ENCODE measurements at regions of chr9 and their contacts with region 1.

Region 1: DNA sequence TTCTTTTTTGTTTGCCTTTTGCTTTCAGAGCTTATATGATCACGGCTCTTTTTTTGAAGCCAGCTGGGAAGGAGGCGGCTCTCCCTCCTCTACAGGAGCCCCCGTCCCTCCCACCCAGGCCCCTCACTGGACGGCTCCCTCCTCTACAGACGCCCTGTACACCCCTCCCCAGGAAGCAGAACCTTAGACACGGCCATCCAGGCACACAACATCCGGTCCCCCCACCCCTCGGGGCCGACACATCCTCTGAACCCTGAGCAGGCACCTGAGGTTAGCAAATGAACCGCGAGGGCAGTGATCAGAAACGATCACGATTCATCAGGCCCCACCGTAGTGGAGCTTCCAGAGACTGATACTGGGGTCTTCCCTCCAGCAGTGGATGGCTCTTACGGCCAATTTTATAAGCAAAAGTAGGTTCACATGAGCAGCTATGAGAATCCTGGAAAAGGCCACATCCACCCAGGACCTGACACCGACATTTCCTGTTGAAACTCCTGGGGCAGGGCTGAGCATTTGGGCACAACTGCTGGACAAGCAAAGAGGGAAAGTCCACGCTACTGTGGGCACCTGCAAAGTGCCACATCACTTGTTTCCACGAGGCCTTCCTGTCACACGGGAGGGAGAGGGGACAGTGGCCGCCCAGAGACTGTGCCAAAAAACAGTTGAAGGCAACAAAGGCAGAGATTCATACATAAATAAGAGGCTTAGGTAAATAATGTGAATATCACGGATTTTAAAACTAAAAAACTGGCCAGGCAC is 78.9 kb downstream of the SEMA4D start:
- DNase-seq: peak; percentile 65
- H3K4me3 Mint-ChIP-seq: peak overlapping the region; percentile 92
- H3K27ac Mint-ChIP-seq: peak overlapping the region; percentile 100
- H3K4me1 Mint-ChIP-seq: peaks cover 99% of the 10 kb centered on the region
- H3K27me3 Mint-ChIP-seq: no peaks in the 10 kb centered on the region

Region 2: GRCh38 chr9:89318123-89319014 is 100.7 kb before region 1 on chr9 and contains the start of gene SECISBP2:
- intact Hi-C with region 1: loop called (anchors 2 kb)
- DNase-seq: peak; percentile 93
- H3K4me3 Mint-ChIP-seq: peak within 1 kb of the TSS; percentile 90
- H3K27ac Mint-ChIP-seq: peak within 1 kb of the TSS; percentile 95
- H3K4me1 Mint-ChIP-seq: peaks cover 72% of the 10 kb centered on the region
- H3K27me3 Mint-ChIP-seq: no peaks in the 10 kb centered on the region
- total RNA-seq, gene SECISBP2: 49.4 and 54.9 TPM in 2 replicates

Region 3: DNA sequence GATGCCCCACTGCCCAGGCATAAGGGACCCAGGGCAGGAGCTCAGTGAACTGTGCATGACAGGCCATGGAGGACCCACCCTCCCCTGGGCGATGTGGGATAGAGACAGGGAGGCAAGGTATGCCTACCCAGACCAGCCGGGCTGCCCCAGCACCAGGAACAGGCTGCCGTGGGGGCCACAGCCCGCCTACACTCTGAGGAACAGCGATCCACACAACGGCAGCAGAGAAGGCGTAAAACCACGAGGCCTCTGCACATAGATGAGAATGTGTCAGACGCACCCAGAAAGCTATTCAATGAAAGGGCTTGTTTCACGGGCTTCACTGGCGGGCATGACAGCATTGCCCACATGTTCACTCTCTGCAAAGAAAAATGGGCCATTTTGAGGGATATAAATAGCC is 29.3 kb after region 1 on chr9:
- intact Hi-C with region 1: loop called (anchors 1 kb)
- DNase-seq: no peak
- H3K4me3 Mint-ChIP-seq: peak overlapping the region; percentile 74
- H3K27ac Mint-ChIP-seq: peak overlapping the region; percentile 91
- H3K4me1 Mint-ChIP-seq: peaks cover 92% of the 10 kb centered on the region
- H3K27me3 Mint-ChIP-seq: no peaks in the 10 kb centered on the region

Region 4: DNA sequence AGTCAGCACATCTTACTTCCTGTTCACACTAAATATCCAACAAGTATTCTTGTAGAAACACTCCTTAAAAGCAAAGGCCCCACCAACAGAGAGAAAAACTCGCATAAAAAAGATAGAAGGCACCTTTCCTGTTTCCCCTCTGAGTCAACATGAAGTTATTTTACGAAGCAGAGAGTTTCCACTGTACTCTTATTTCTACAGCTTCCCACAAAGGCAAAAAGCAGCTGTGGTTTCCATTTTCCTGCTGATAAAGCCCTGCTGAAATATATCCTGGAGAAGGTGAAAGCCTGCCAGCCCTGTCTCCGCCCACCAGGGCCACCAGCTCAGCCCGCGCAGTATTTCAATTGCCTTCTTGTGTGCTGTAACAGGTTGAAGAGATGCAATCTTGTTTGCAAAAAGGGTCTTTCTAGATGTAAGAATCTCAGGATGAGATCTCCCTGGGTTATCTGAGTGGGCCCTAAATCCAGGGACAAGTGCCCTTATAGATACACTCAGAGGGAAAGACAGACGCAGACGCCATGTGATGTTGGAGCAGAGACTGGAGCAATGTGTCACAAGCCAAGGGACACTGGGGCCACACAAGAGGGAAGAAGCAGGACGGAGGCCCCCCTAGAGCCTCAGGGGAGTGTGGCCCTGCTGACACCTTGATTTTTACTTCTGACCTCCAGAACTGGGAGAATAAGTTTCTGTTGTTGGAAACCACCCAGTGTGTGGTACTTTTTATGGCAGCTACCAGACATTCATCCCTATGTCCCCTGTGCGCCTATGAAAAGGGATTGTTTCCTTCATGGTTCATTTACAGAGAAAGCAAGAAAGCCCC is 59.0 kb after region 1 on chr9:
- intact Hi-C with region 1: loop called (anchors 1 kb)
- DNase-seq: peak; percentile 47
- H3K4me3 Mint-ChIP-seq: peak overlapping the region; percentile 89
- H3K27ac Mint-ChIP-seq: peak overlapping the region; percentile 96
- H3K4me1 Mint-ChIP-seq: peaks cover 90% of the 10 kb centered on the region
- H3K27me3 Mint-ChIP-seq: no peaks in the 10 kb centered on the region

Region 5: DNA sequence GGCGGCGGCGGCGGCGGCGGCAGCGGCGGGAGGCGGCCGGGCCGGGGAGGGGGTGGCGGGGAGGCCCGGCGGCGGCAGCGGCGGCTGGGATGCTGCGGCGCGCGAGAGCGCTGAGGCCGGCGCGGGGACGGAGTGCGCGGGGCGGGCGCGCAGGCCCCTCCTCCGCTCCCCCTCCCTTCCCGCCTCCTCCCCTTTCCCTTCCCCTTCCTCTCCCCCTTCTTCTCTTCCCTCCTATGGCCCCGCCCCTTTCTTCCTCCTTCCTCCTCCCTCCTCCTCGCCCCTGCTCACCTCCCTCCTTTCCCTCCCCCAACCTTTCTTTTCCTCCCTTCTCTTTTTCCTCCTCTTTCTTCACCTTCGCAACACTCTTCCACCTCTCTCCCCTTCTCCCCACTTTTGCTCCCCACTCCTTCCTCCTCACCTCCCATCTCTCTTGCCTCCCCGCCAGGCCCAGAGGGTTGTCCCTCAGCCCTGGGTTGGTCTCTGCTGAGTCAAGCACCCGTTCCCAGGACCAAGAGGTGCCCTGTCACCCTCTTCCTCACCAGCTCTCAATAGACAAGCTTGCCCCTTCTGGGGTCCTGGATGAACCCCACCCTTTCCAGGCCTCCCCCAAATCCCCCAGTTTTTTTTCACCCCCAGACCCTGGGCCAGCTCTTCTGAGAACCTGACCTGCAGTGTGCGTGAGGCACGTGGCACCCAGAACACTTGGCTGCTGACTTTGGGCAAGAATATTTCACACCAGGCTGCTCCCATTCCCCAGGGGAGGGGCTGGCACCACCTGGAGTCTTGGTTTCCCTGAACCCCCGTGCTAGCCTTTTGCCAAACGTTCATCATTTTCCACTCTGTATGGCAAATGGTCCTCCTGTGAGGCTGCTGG is 79.2 kb after region 1 on chr9 and contains the start of gene SEMA4D:
- intact Hi-C with region 1: loop called (anchors 1 kb)
- DNase-seq: peak; percentile 49
- H3K4me3 Mint-ChIP-seq: peak within 1 kb of the TSS; percentile 94
- H3K27ac Mint-ChIP-seq: peak within 1 kb of the TSS; percentile 94
- H3K4me1 Mint-ChIP-seq: peaks cover 89% of the 10 kb centered on the region
- H3K27me3 Mint-ChIP-seq: no peaks in the 10 kb centered on the region
- total RNA-seq, gene SEMA4D: 388 and 411 TPM in 2 replicates

Region 6: GRCh38 chr9:89536145-89536574 is 117.1 kb after region 1 on chr9:
- intact Hi-C with region 1: loop called (anchors 1 kb)
- DNase-seq: peak; percentile 41
- H3K4me3 Mint-ChIP-seq: peak overlapping the region; percentile 30
- H3K27ac Mint-ChIP-seq: peak overlapping the region; percentile 90
- H3K4me1 Mint-ChIP-seq: peaks cover 82% of the 10 kb centered on the region
- H3K27me3 Mint-ChIP-seq: no peaks in the 10 kb centered on the region